ENCODE measurements at regions of chr5 and their contacts with region 1.

Region 1: DNA sequence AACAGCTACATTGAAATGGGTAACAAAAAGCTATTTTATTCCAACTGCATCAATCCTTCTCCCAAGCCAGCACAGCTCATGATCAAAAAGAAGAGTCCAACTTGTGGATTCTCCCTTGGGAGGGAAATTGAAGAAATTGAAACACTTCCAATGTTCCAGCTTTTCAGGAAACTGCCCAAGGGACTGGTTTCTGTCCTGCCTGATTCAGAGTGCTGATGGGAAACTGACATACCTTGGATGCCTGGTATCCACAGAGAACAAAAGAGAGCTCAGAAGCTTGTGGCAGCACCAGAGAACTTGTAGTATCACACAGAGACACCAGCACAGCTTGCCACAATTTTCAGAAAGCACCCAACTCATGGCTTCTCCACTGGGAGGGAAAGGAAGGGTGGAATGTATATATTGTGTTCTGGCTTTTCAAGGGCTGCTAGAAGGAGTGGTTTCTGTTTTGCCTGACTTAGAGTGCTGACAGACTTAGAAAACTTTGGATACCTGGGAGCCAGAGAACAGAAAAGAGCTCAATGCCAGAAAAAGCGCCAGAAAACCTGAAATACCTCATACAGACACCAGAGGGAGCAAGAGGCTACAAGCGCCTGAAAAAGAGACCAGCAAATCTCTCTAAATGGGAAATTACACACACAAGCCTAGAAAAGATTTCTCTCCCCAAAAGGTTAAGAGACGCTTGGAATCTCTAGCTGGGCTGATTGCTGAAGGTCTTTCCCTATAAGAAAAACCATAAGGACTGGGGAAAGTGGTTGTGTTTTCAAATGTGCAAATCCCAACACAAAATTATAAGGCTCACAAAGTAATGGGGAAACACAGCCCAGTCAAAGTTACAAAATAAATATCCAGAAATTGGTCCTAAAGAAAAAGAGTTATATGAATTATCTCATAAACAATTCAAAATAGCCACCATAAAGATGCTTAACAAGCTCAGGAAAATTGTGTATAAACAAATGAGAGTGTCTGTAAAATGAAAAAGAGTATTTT is 178.8 kb downstream of the SPOCK1 start:
- DNase-seq: peak; percentile 16 to 32
- ATAC-seq: peak in 1 of 2 donors; percentile 20
- H3K4me3 ChIP-seq: no peak overlapping the region
- H3K27ac ChIP-seq: no peak overlapping the region
- H3K4me1 ChIP-seq: peaks cover 9 to 20% of the 10 kb centered on the region in 2 donors
- H3K27me3 ChIP-seq: no peaks in the 10 kb centered on the region
- CTCF ChIP-seq: peak; percentile 67 to 87 (median 84)
- POLR2A ChIP-seq: no peak

Region 2: DNA sequence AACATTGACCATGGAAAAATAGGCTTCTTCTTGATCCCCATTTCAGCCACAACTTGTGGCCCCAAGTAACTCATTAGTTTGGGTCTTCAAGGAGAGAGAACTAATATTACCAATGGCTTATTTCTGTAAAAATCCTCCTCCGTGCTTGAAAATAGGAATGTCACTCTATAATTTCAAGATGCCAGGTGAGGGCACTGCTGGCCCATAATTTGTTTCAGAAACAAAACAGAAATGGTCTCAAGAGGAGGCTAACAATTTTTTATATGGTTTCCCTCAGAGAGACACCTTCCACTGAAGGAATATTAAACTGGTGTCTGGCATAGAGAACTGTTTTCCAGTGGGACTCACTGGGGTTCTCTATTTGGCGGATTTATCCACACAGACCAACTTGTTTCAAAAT is 518.0 kb before region 1 on chr5:
- in situ Hi-C with region 1: loop called in 1 of 4 experiments (anchors 10 kb)
- intact Hi-C with region 1: no loop called
- DNase-seq: peak in 1 of 2 donors; percentile 14
- ATAC-seq: peak in 1 of 2 donors; percentile 52
- H3K4me3 ChIP-seq: no peak overlapping the region
- H3K27ac ChIP-seq: no peak overlapping the region
- H3K4me1 ChIP-seq: no peaks in the 10 kb centered on the region
- H3K27me3 ChIP-seq: no peaks in the 10 kb centered on the region
- CTCF ChIP-seq: peak in 3 of 5 experiments; percentile 15 to 46 (median 37)
- POLR2A ChIP-seq: no peak

Region 3: GRCh38 chr5:136840601-136841000 is 479.8 kb before region 1 on chr5:
- in situ Hi-C with region 1: no loop called
- intact Hi-C with region 1: no loop called
- DNase-seq: no peak
- ATAC-seq: no peak
- H3K4me3 ChIP-seq: no peak overlapping the region
- H3K27ac ChIP-seq: no peak overlapping the region
- H3K4me1 ChIP-seq: no peaks in the 10 kb centered on the region
- H3K27me3 ChIP-seq: no peaks in the 10 kb centered on the region
- CTCF ChIP-seq: no peak
- POLR2A ChIP-seq: no peak

Region 4: DNA sequence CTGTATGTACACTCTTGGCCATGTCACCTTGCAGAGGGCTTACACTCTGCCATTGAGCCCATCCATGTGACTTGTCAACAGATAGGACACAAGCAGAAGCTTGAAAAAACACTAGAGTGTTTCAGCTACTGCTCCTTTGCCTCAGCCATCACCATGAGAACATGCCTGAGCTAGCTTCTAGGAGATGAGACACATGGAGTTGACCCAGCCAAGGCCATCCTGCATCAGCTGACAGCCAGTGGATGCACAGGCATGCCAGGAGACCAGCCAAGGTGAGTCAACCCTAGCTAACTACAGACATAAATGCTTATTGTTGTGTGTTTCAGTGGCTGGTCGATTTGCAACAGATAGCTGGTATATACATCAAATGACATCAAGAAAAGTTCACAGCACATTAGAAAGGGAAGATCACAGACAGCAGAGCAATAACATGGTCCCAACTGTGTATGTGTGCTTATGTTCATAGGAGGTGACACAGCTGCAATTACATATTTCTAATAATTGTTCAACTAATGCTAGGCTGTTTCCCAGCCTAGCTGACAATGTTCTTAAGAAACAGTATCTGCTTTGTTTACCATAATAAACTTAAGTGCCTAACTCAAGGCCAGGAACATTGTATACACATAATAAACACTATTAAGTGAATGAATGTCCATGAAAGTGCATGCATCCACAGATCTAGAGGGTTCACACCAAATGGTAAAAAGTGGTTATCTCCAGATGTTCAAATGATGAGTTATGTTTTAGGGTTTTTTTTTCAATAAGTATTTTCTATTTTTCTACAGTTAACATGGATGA is 73.0 kb after region 1 on chr5:
- in situ Hi-C with region 1: no loop called
- intact Hi-C with region 1: loop called (anchors 5 kb)
- DNase-seq: peak in 1 of 2 donors; percentile 24
- ATAC-seq: no peak
- H3K4me3 ChIP-seq: no peak overlapping the region
- H3K27ac ChIP-seq: no peak overlapping the region
- H3K4me1 ChIP-seq: peaks cover 12 to 27% of the 10 kb centered on the region in 2 donors
- H3K27me3 ChIP-seq: no peaks in the 10 kb centered on the region
- CTCF ChIP-seq: no peak
- POLR2A ChIP-seq: no peak

Region 5: DNA sequence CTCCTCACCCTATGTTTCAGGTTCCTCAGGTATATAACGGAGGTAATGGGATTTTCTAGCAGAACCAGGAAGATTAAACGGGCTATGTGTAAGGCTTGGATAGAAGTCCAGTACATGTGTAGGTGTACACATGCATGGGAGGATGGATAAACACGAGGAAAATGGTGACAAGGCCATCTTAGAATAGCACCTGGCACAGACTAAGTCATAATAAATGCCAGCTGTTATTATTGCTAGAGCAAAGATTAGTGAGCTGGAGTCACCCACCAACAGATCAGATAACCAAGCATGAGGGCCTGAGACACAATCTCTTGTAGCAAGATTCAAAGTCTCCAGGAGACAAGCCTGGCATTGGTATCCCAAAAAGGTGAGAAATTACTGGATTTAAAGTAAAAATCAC is 157.7 kb after region 1 on chr5:
- in situ Hi-C with region 1: no loop called
- intact Hi-C with region 1: loop called (anchors 5 kb)
- DNase-seq: peak; percentile 30 to 46
- ATAC-seq: peak; percentile 94 to 96
- H3K4me3 ChIP-seq: no peak overlapping the region
- H3K27ac ChIP-seq: peak overlapping the region; percentile 21 to 81 (median 74)
- H3K4me1 ChIP-seq: peaks cover 24 to 27% of the 10 kb centered on the region in 2 donors
- H3K27me3 ChIP-seq: no peaks in the 10 kb centered on the region
- CTCF ChIP-seq: no peak
- POLR2A ChIP-seq: peak in 1 of 2 donors; percentile 19

Region 6: GRCh38 chr5:137699336-137700281 is 379.3 kb after region 1 on chr5:
- in situ Hi-C with region 1: no loop called
- intact Hi-C with region 1: no loop called
- DNase-seq: no peak
- ATAC-seq: no peak
- H3K4me3 ChIP-seq: no peak overlapping the region
- H3K27ac ChIP-seq: peak overlapping the region in 3 of 4 donors; percentile 8 to 44 (median 36)
- H3K4me1 ChIP-seq: peaks cover 13 to 24% of the 10 kb centered on the region in 2 donors
- H3K27me3 ChIP-seq: no peaks in the 10 kb centered on the region
- CTCF ChIP-seq: no peak
- POLR2A ChIP-seq: no peak

Region 7: DNA sequence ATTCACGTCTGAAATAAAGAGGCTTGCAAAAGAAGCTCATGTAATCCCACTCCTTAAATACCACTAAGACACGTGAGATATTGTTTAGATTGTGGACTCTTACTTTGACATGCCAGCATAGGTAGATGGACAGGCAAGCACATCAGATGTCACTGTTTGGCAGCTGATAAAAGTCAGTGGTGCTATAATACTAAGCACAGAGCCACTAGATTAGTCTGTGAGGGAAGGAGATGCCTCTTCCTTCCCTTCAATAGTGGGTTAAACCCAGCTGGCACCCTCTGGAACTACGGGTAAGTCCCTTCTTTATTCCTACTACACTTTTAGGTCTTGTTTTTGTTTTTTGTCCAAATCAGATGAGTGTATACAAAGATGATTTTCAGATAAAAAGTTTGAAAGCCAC is 547.3 kb after region 1 on chr5 and contains the start of gene MYOT:
- in situ Hi-C with region 1: no loop called
- intact Hi-C with region 1: no loop called
- DNase-seq: peak; percentile 70 to 78
- ATAC-seq: peak; percentile 72 to 75
- H3K4me3 ChIP-seq: peak within 1 kb of the TSS; percentile 48 to 68 (median 54)
- H3K27ac ChIP-seq: peak within 1 kb of the TSS; percentile 87 to 97 (median 90)
- H3K4me1 ChIP-seq: peaks cover 21 to 28% of the 10 kb centered on the region in 2 donors
- H3K27me3 ChIP-seq: no peaks in the 10 kb centered on the region
- CTCF ChIP-seq: peak in 1 of 5 experiments; percentile 45
- POLR2A ChIP-seq: peak; percentile 96 to 99
- total RNA-seq, gene MYOT: 99.0 to 801 (median 294) TPM

Region 8: GRCh38 chr5:137975208-137975607 is 654.9 kb after region 1 on chr5:
- in situ Hi-C with region 1: no loop called
- intact Hi-C with region 1: no loop called
- DNase-seq: no peak
- ATAC-seq: no peak
- H3K4me3 ChIP-seq: no peak overlapping the region
- H3K27ac ChIP-seq: no peak overlapping the region
- H3K4me1 ChIP-seq: no peaks in the 10 kb centered on the region
- H3K27me3 ChIP-seq: no peaks in the 10 kb centered on the region
- CTCF ChIP-seq: no peak
- POLR2A ChIP-seq: no peak

Measured in gastrocnemius medialis (tissue), 4 donors.